ENCODE measurements at regions of chr11 and their contacts with region 1.

Region 1: DNA sequence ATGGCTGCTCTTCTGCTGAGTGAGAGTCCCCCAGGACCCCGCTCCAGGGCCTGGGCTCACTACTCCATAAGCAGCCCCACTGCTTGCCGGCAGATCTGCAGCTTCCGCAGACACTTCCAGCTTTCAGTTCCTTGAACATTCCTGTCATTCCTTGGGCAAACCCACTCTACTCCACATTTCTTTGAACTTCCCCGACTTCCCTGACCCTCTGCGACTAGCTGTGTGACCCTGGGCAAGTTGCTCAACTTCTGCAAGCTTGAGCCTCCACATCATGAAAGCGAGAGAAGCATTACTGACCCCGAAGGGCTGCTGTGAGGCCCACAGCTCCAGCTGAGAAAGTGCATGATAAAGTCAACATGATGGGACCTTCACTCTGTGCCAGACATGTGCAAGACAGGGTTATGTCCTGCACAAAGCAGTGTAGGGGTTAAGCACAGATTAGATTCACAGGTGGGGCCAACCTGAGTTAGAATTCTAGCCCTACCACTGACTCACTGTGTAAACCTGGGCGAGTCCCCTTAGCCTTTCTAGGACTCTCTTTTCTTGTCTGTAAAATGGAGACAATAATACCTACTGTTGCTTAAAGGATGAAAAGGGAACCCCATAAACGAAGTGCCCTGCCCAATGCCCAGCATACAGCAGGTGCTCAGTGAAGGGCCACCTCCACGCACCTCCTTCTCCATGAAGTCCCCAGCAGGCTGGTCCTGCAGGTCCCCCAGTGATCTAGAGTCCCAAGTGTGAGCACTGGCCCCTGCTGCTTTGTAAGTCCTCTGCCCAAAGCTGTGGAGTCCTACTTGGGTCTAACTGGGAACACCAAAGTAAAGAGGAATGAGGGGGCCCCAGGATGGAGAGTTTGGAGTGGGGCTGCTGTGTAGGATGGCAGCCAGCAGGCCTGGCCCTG is 51.6 kb downstream of the THAP12 start:
- DNase-seq: no peak
- ATAC-seq: no peak; the same call in 2 of the 3 replicates
- H3K4me3 ChIP-seq: no peak overlapping the region
- H3K27ac ChIP-seq: no peak overlapping the region
- H3K4me1 ChIP-seq: peaks cover 6 to 8% of the 10 kb centered on the region in 2 experiments; a peak in 3 of 5 replicates
- H3K27me3 ChIP-seq: peaks cover 0 to 21% of the 10 kb centered on the region in 2 experiments; a peak in 2 of 5 replicates
- CTCF ChIP-seq: no peak
- EP300 ChIP-seq: no peak
- POLR2A ChIP-seq: no peak
- RAD21 ChIP-seq: no peak

Region 2: GRCh38 chr11:76670485-76671236 is 341.3 kb after region 1 on chr11 and contains the start of gene LRRC32:
- CTCF ChIA-PET with region 1: no interaction called
- POLR2A ChIA-PET with region 1: no interaction called
- in situ Hi-C with region 1: no loop called
- intact Hi-C with region 1: loop called (anchors 10 kb)
- DNase-seq: peak; percentile 36 to 84 (median 72)
- ATAC-seq: peak; percentile 70
- H3K4me3 ChIP-seq: peak within 1 kb of the TSS; percentile 44
- H3K27ac ChIP-seq: no peak within 1 kb of the TSS
- H3K4me1 ChIP-seq: peaks cover 3 to 26% of the 10 kb centered on the region in 2 experiments; a peak in 2 of 5 replicates
- H3K27me3 ChIP-seq: peaks cover 12 to 32% of the 10 kb centered on the region in 2 experiments
- CTCF ChIP-seq: no peak
- EP300 ChIP-seq: no peak
- POLR2A ChIP-seq: no peak
- RAD21 ChIP-seq: no peak
- polyA plus RNA-seq, gene LRRC32: not detected

Measured in K562 (cell line).